Gastrocnemius medialis (tissue), 4 donors: ENCODE measurements at regions of chr19 and their contacts with region 1.

Region 1: DNA sequence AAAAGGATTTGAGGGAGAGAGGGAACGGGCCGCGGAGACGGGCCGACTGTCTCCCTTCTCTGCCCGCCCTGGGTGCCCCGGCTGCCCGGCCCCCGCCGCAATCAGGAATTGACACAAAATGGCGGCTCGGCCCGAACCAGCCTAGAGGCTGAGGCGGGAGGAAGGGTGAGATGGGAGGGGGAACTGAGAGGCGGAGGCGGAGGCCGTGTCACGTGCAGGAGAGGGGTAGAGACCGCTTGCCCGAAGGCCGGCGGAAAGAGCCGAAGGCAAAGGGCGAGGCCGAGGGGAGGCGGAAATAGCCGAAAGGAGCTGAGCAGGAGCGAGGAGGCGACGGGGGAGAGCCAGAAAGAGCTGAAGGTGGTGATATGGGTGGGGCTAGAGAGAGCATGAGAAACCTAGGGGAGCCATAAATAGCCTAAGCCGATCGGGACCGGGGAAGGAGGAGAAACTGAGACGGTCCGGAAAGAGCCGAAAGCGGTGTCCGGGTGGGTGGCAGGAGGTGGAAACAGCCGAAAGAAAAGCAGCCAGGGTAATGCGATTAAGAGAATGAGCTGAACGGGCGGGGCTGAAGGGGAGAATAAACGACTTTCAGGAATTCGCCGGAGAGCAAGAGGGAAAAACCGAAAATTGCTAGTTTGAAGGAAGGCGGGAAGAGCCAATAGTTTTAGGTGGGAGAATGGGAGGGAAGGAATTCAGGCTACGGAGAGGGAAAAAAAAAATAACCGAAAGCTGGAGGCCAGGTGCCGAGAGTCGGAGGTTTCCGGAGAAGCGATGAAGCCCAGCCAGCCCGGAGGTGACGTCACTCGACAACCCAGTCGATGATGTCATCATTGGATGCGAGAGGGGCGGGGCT is at the start of gene ZC3H4:
- DNase-seq: peak; percentile 100
- ATAC-seq: peak; percentile 89
- H3K4me3 ChIP-seq: peak within 1 kb of the TSS; percentile 87 to 100 (median 98)
- H3K27ac ChIP-seq: peak within 1 kb of the TSS; percentile 96 to 100 (median 99)
- H3K4me1 ChIP-seq: peaks cover 28 to 29% of the 10 kb centered on the region in 2 donors
- H3K27me3 ChIP-seq: no peaks in the 10 kb centered on the region
- CTCF ChIP-seq: no peak
- POLR2A ChIP-seq: peak; percentile 85 to 86
- total RNA-seq, gene ZC3H4: 16.2 to 31.7 (median 22.8) TPM

Region 2: GRCh38 chr19:46850228-46851203 is 262.7 kb before region 1 on chr19 and contains the start of gene AP2S1:
- in situ Hi-C with region 1: loop called in 1 of 4 experiments (anchors 10 kb)
- intact Hi-C with region 1: loop called (anchors 2 kb)
- DNase-seq: peak; percentile 96 to 97
- ATAC-seq: peak; percentile 99 to 100
- H3K4me3 ChIP-seq: peak within 1 kb of the TSS; percentile 84 to 97 (median 91)
- H3K27ac ChIP-seq: peak within 1 kb of the TSS; percentile 90 to 95 (median 92)
- H3K4me1 ChIP-seq: peaks cover 11 to 12% of the 10 kb centered on the region in 2 donors
- H3K27me3 ChIP-seq: no peaks in the 10 kb centered on the region
- CTCF ChIP-seq: peak in 2 of 5 experiments; percentile 22 to 28
- POLR2A ChIP-seq: peak; percentile 65 to 78
- total RNA-seq, gene AP2S1: 42.7 to 94.1 (median 64.9) TPM

Region 3: GRCh38 chr19:47130591-47131227 is 17.5 kb after region 1 on chr19 and contains the start of gene SAE1:
- in situ Hi-C with region 1: no loop called
- intact Hi-C with region 1: loop called (anchors 1 kb)
- DNase-seq: peak; percentile 86 to 95
- ATAC-seq: peak; percentile 93 to 94
- H3K4me3 ChIP-seq: peak within 1 kb of the TSS; percentile 65 to 86 (median 84)
- H3K27ac ChIP-seq: peak within 1 kb of the TSS; percentile 80 to 88 (median 86)
- H3K4me1 ChIP-seq: peaks cover 0 to 4% of the 10 kb centered on the region in 2 donors
- H3K27me3 ChIP-seq: no peaks in the 10 kb centered on the region
- CTCF ChIP-seq: peak in 4 of 5 experiments; percentile 43 to 71 (median 60)
- POLR2A ChIP-seq: peak; percentile 50 to 65
- total RNA-seq, gene SAE1: 29.7 to 74.6 (median 46.4) TPM

Region 4: DNA sequence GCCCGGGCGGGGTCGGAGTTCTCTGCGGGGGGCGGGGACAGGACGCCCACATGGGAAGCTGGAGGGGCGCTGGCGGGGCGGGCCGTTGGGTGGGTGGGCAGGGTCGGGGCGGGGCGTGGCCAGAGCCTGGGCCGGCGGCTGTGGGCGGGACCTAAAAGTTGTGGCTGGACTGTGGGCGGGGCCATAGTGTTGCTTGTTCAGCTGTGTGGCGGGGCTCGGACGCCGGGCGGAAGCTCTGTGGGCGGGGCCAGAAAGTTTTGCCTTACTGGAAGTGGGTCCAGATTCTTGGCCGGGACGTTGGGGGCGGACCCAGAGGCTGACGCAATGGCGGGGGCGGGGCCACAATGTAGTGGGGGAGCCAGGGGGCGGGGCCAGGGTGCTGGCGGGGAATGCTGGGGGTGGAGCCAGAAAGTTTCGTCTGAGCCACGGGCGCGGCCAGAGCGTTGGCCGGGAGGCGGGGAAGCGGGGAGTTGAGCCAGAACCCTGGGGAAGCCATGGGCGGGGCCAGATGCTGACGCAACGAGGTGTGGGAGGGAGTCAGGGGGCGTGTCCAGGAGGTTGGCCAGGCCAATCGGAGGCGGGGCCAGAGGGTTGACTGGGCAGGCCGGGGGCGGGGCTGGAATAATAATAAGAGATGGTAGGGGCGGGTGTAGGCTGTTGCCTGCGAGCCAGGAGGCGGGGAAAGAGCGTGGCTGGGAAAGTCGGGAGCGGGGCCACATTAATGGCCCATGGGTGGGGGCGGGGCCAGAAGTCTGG is 143.6 kb after region 1 on chr19:
- in situ Hi-C with region 1: no loop called
- intact Hi-C with region 1: loop called (anchors 2 kb)
- DNase-seq: peak; percentile 100
- ATAC-seq: peak; percentile 78 to 84
- H3K4me3 ChIP-seq: peak overlapping the region; percentile 50 to 72 (median 70)
- H3K27ac ChIP-seq: peak overlapping the region; percentile 82 to 95 (median 91)
- H3K4me1 ChIP-seq: peaks cover 16% of the 10 kb centered on the region in 2 donors
- H3K27me3 ChIP-seq: no peaks in the 10 kb centered on the region
- CTCF ChIP-seq: no peak
- POLR2A ChIP-seq: no peak